Psoas muscle (tissue), 8 donors: ENCODE measurements at regions of chr10 and their contacts with region 1.

Region 1: GRCh38 chr10:86585037-86585725 is 63.6 kb upstream of the WAPL start:
- DNase-seq: peak; percentile 60 to 81
- ATAC-seq: peak; percentile 93 to 99 (median 96)
- H3K4me3 ChIP-seq: peak overlapping the region; percentile 19
- H3K27ac ChIP-seq: no peak overlapping the region
- H3K4me1 ChIP-seq: peaks cover 7% of the 10 kb centered on the region
- H3K27me3 ChIP-seq: no peaks in the 10 kb centered on the region
- CTCF ChIP-seq: peak; percentile 96

Region 2: GRCh38 chr10:86399879-86400704 is 185.1 kb before region 1 on chr10:
- intact Hi-C with region 1: loop called (anchors 1 to 2 kb)
- DNase-seq: peak; percentile 95 to 96
- ATAC-seq: peak; percentile 93 to 95 (median 94)
- H3K4me3 ChIP-seq: peak overlapping the region; percentile 75
- H3K27ac ChIP-seq: peak overlapping the region; percentile 54
- H3K4me1 ChIP-seq: peaks cover 10% of the 10 kb centered on the region
- H3K27me3 ChIP-seq: no peaks in the 10 kb centered on the region
- CTCF ChIP-seq: peak; percentile 97

Region 3: DNA sequence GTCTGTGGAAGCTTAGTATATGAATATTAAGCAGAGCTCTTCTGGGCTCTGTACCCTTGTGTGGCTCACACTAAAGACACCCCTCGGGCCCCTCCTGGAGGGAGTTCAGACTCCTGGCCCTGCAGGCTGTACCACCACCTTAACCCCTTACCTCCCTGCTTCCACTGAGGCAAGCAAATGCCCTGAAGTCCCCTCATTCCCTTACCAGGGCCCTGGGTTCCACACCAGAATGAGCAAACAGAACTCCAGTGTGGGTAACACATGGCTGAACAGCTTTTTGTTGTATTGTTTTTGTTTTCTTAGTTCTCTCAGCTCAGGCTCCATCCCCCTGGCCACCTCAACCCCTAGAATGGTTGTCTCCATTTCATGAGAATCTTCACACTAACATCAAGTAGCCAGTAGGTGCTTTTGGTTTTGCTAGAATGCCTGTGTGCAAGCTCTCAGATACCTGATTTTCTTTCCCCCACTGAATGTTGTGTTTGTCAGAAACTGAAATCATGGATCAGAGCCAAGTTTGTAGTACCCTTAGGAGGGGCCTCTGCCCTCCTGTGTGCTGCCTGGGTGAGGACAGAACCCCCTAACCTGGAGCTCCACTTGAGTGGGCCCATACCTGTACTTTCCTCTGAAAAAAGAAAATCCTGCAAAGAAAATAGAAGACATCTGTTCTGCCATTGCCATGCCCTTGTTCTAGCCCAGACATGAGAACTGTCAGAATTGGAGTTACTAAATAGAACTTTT is 60.8 kb before region 1 on chr10:
- intact Hi-C with region 1: loop called in 1 of 2 experiments (anchors 2 kb)
- DNase-seq: no peak
- ATAC-seq: no peak
- H3K4me3 ChIP-seq: no peak overlapping the region
- H3K27ac ChIP-seq: peak overlapping the region; percentile 53
- H3K4me1 ChIP-seq: peaks cover 31% of the 10 kb centered on the region
- H3K27me3 ChIP-seq: no peaks in the 10 kb centered on the region
- CTCF ChIP-seq: no peak

Region 4: GRCh38 chr10:86535057-86535882 is 49.9 kb before region 1 on chr10:
- intact Hi-C with region 1: loop called in 1 of 2 experiments (anchors 5 kb)
- DNase-seq: peak; percentile 89 to 95
- ATAC-seq: peak; percentile 95 to 97 (median 96)
- H3K4me3 ChIP-seq: peak overlapping the region; percentile 69
- H3K27ac ChIP-seq: peak overlapping the region; percentile 76
- H3K4me1 ChIP-seq: peaks cover 24% of the 10 kb centered on the region
- H3K27me3 ChIP-seq: no peaks in the 10 kb centered on the region
- CTCF ChIP-seq: no peak